Calu3 (cell line): ENCODE measurements at regions of chr1 and their contacts with region 1.

Region 1: DNA sequence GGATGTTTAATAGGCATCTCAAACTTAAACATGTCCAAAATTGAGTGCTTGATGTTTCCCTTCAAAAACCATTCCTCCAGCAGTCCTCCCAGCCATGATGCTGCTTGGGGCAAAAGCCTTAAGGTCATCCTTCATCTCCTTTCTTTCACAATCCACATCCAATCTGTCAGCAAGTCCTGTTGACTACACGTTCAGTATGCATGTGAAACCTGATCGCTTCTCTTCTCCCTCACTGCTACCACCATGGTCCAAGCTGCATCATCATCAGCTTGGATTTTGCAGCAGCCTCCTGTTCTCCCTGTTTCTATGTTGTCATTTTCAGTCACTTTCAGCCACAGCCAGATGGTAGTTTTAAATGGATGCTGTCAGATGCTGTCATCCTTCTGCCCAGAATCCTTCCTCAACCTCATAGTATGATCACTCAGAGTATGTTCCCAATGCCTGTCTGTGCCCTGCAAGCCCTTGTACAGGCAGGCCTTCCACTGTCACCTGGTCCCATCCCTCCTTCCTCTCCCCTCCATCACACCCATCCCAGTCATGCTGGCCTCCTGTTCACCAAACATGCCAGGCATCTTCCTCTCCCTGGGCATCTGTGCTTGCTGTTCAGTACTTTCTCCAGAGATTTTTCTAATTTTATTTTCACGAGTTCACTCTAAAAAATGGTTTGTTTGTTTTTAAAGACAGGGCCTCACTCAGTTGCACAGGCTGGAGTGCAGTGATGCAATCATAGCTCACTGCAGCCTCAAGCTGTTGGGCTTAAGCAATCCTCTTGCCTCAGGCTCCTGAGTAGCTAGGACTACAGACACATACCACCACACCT is 66.0 kb downstream of the SYDE2 start:
- DNase-seq: no peak
- H3K4me3 Mint-ChIP-seq: no peak overlapping the region
- H3K27ac Mint-ChIP-seq: no peak overlapping the region
- H3K4me1 Mint-ChIP-seq: no peaks in the 10 kb centered on the region
- H3K27me3 Mint-ChIP-seq: no peaks in the 10 kb centered on the region
- CTCF ChIP-seq: no peak

Region 2: DNA sequence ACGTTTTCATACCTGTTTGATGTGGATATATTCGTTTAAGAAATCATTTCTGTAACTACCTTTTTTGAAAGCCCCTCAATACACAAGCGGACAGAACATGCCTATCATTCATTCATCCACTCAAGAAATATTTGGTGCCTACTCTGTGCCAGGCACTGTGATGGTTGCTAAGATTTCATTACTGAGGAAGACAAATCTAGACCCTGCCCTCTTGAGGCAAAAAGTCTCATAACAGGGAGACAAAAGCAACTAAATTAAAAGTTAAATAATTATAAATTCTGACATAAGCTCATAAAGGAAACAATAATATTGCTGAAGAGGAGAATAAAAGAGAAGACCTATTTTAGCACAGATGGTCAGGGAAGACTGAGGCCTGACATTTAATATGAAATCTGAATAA is 777.0 kb after region 1 on chr1:
- CTCF ChIA-PET with region 1: interaction called, 11 read pairs
- intact Hi-C with region 1: no loop called
- DNase-seq: peak; percentile 3
- H3K4me3 Mint-ChIP-seq: no peak overlapping the region
- H3K27ac Mint-ChIP-seq: no peak overlapping the region
- H3K4me1 Mint-ChIP-seq: no peaks in the 10 kb centered on the region
- H3K27me3 Mint-ChIP-seq: no peaks in the 10 kb centered on the region
- CTCF ChIP-seq: no peak